ENCODE measurements at regions of chr19 and their contacts with region 1.

Region 1: GRCh38 chr19:42268704-42269477 is at the start of gene CIC:
- DNase-seq: peak; percentile 100
- H3K4me3 ChIP-seq: peak within 1 kb of the TSS; percentile 62 to 75
- H3K27ac ChIP-seq: peak within 1 kb of the TSS; percentile 97 to 98
- H3K4me1 ChIP-seq: peaks cover 6 to 20% of the 10 kb centered on the region in 2 donors
- H3K27me3 ChIP-seq: no peaks in the 10 kb centered on the region
- CTCF ChIP-seq: no peak
- total RNA-seq, gene CIC: 247 TPM

Region 2: DNA sequence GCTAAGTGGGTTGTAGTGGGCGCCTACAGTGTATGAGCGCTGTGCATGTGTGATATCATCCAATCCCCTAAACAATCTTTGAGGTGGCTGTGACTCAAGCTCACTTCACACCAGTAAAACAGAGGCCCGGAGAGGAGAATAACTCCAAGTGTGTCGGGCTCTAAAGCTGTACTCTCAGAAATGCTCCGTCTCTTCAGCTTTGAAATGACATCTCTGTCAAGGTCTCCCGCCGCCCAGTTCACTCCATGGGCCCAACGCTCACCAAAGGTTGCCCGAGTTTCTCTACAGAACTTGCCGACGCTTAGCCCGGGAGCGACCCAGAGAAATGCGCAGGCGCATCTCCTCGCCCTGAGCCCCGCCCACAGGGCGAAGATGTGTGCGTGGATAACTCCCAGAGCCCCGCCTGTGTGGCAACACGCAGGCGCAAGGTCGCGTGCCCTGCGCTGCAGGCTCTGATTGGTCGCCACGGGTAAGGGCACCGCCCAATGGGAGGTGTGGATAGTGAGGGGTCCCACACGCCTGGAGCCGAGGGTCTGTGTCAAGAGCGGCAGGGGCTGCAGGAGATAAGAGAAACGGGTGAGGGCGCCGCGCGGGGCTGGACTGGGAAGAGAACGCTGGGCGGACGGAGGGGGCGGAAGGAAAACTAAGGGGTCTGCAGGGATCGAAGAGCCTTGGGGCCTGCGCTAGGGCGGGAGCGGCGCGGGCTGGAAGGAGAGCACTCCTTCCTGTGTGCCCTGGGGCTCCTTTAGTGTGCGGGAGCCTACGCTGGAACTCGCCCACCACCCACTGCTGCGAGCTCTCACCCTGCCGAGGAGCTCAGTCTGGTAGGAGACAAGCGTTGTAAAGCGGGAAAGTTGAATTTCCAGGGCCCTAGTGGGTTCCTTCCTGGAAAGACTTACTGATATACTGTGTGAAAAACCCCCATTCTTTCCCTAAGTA is 48.8 kb before region 1 on chr19 and contains the start of gene ZNF526:
- intact Hi-C with region 1: loop called (anchors 1 kb)
- DNase-seq: peak; percentile 94 to 98
- H3K4me3 ChIP-seq: peak within 1 kb of the TSS; percentile 61 to 93
- H3K27ac ChIP-seq: peak within 1 kb of the TSS; percentile 84 to 90
- H3K4me1 ChIP-seq: peaks cover 0 to 34% of the 10 kb centered on the region in 2 donors
- H3K27me3 ChIP-seq: no peaks in the 10 kb centered on the region
- CTCF ChIP-seq: no peak
- total RNA-seq, gene ZNF526: 7.0 TPM

Region 3: DNA sequence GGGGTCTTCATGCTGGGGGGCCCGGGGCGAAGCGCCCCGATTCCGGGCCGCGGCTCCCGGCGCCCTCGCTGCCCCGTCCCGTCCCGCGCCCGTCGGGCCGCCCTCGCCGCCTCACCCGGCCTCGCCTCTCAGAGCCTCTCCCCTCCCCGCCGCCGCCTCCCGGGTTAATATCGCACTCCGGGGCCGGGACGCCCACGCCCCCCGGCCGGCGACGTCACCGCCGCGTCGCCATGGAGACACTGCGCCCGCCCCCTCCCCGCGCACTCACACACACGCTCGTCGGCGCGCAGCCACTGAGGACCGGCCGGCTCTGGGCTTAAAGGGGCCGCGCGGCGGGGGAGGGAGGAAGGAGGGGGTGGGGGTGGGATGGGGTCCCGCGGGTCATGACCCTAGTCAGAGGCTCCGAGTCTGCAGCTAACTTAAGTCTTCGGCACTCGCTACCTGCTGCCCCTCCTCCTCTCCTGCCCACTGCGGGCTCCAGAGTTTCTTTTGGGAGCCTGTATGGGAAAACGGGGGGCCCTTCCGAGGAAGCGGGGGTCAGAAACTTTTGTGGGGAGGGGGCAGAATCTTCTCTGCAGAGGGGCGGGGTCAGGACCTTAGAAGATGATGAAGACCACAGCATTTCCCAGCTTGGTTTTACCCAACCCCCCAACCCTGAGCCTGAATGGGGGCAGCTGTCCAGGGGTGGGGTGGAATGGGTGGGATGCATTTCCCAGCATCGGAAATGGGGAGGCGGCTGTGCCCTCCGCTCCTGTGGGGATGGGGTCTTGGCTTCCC is 13.7 kb before region 1 on chr19 and contains the start of gene ERF:
- intact Hi-C with region 1: loop called (anchors 1 kb)
- DNase-seq: peak; percentile 84 to 97
- H3K4me3 ChIP-seq: peak within 1 kb of the TSS; percentile 84 to 95
- H3K27ac ChIP-seq: peak within 1 kb of the TSS; percentile 97 to 99
- H3K4me1 ChIP-seq: peaks cover 20 to 29% of the 10 kb centered on the region in 2 donors
- H3K27me3 ChIP-seq: no peaks in the 10 kb centered on the region
- CTCF ChIP-seq: no peak
- total RNA-seq, gene ERF: 51.6 TPM

Region 4: DNA sequence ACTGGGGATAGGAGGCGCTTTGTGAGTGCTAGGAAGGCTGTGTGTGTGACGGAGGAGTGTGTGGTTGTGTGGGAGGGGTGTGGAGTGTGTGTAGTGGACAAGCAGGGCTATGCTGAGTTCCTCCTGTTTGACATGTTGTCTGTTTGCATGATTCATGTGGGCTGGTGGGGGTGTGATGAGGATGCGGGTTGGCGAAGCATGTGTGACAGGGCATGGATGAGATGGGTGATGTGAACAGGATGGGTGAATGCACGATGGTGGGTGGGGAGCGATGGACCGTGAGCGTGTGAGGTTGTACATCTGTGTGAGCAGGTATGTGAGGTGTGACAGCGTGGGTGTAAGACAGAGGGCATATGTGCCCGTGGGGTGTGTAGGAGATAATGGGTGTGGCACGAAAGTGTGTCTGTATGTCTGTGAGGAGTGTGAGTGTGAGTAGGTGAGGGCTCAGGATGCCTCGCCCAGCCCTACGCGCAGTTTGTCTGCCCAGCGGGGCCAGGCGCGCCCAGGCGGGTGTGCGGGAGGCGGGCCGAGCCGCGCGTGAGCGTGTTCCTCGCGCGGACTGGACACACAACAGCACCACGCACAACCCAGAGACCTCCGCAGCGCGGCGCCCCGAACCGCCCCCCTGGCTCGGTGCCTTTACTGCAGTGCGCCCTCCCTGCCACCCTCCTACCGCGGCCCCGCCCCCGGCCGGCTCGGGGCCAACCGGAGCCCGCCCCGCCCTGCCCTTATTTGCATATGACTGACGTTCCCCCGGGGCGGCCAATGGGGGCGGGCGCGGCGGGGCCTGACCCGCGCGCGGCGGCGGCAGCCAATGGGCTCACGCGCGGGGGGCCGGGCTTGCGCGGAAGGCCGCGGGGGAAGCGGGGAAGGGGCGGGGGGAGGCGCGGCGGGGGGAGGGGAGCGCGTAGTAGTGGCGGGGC is 14.5 kb after region 1 on chr19:
- intact Hi-C with region 1: loop called (anchors 1 kb)
- DNase-seq: peak; percentile 87 to 99
- H3K4me3 ChIP-seq: peak overlapping the region; percentile 85 to 86
- H3K27ac ChIP-seq: peak overlapping the region; percentile 93 to 96
- H3K4me1 ChIP-seq: peaks cover 46 to 62% of the 10 kb centered on the region in 2 donors
- H3K27me3 ChIP-seq: no peaks in the 10 kb centered on the region
- CTCF ChIP-seq: no peak

Region 5: DNA sequence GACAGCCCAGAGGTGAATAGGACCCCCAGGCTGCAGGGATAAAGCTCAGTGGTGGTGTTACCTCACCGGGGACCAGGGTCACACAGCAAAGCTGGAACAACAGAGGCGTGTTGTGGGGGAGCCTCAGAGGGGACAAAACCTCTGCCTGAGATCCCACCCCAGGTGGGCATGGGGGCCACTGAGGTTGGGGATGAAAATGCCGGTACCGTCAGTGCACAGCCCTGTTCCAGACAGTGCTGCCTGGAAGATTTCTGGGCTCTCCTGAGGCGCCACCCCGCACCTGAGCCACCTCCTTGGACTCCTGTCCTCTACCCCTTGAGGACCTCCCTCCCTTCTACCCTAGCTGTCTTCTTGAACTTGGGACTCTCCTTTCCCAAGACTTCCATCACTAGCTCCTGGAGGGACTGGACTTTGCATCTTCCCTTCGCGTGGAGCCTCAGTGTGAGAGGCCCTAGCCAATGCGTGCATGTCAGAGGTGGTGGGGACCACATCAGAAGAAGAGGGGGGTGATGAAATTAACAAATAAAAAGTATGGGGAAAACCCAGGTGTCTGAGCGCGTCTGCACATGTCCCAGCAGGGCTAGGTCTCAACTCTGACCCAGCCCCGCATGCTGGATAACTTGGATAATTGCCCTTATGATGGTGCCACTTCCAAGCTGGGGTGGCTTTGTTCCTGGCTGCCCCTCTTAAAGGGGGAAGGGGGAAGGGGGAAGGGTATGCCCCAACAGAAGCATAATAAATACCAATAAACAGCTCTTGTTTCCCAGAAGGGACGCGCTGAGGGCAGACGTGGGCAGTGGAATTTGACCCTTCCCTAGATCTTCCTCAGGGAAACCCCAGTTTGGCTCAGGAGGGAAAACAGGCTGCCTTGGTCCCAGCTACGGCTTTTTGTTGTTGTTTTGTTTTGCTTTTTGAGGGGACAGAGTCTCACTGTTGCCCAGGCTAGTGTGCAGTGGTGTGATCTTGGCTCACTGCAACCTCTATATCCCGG is 109.6 kb after region 1 on chr19:
- intact Hi-C with region 1: no loop called
- DNase-seq: no peak
- H3K4me3 ChIP-seq: no peak overlapping the region
- H3K27ac ChIP-seq: no peak overlapping the region
- H3K4me1 ChIP-seq: no peaks in the 10 kb centered on the region
- H3K27me3 ChIP-seq: no peaks in the 10 kb centered on the region
- CTCF ChIP-seq: no peak